ENCODE measurements at regions of chr17 and their contacts with region 1.

Region 1: DNA sequence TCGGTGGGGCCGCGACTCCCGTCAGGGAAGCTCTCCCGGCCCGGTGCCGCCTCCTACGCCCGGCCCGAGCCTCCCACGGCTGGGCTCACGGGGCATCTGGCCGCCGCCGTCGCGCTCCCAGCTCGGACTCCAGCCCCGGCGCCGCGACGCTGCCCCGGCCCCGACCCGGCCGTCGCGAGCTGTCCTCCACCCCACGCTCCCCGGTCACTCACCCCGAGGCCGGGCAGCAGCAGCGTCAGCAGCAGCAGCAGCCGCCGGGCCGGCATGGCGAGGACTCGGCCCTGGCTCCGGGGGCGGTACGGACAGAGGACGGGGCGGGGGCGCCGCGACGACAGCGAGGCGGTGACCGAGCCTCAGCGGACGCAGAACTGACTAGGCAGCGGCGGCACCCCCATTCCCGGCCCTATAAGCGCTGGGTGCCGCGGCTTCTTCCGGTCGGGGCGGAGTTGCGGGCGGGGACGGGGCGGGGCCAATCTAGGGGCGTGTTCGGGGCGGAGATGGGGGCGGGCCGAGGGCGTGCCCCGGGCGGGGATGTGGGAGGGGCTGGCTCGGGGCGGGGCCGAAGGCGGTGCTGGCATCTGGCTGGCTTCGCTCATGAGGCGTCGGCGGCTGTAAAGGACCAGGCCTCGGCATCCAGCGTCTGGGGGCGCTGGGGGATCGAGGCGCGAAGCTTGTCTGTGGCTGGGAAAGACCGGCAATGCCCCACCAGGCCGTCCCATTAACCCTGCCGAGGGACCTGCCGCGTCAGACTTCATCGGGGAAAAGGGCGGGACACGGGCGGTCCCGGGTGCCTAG is at the start of gene ERN1:
- DNase-seq: peak; percentile 92
- ATAC-seq: peak; percentile 87
- H3K4me3 ChIP-seq: peak within 1 kb of the TSS; percentile 32 to 80 (median 66)
- H3K4me3 Mint-ChIP-seq: peak within 1 kb of the TSS; percentile 89
- H3K27ac ChIP-seq: peak within 1 kb of the TSS; percentile 72 to 76
- H3K27ac Mint-ChIP-seq: peak within 1 kb of the TSS; percentile 89
- H3K4me1 ChIP-seq: peaks cover 13 to 23% of the 10 kb centered on the region in 2 donors
- H3K4me1 Mint-ChIP-seq: peaks cover 21% of the 10 kb centered on the region
- H3K27me3 ChIP-seq: no peaks in the 10 kb centered on the region
- H3K27me3 Mint-ChIP-seq: no peaks in the 10 kb centered on the region
- CTCF ChIP-seq: no peak
- total RNA-seq, gene ERN1: 19.4 and 24.7 TPM in 2 replicates

Region 2: DNA sequence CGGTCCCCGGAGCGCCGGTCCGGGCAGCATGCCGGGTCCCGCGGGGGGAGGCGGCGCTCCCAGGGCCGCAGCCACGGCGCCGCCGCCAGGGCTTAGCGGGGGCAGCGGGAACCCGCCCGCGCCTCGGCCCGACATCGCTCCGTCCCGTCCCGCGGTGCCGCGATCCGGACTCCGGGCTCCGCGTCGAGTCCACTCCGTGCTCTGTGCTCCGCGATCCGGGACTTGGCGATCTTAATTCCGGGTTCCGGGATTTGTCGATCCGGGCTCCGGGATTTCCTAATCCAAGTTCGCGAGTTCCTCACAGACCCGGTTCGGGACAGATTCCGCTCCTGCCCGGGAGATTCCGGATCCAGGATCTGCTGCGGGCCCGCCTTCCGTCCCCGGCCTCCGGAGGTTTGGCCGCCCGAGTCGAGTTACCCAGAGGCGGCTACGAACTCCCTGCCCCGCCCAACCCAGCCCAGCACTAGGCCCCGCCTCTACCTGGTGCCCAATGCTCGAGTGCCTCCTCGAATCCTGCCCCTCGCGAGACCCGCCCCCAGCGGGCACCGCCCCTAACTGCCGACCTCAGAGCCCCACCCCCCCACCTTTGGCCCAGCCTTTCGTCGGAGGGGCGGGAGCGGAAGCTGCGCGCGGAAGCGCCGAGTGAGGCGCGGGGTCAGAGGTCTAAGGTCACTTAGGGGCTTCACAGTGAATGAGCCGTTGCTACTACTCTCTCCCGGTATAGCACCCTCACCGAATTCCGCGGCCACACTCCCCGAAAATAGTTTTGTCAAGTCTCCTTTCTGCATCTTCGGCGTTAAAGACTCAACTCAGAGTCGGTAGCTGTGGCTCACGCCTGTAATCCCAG is 287.2 kb before region 1 on chr17 and contains the start of gene SMARCD2:
- CTCF ChIA-PET with region 1: interaction called, 3 read pairs
- POLR2A ChIA-PET with region 1: no interaction called
- intact Hi-C with region 1: loop called (anchors 1 kb)
- DNase-seq: peak; percentile 99
- ATAC-seq: peak; percentile 93
- H3K4me3 ChIP-seq: peak within 1 kb of the TSS; percentile 65 to 92 (median 89)
- H3K4me3 Mint-ChIP-seq: peak within 1 kb of the TSS; percentile 94
- H3K27ac ChIP-seq: peak within 1 kb of the TSS; percentile 90 to 92
- H3K27ac Mint-ChIP-seq: peak within 1 kb of the TSS; percentile 94
- H3K4me1 ChIP-seq: peaks cover 35 to 51% of the 10 kb centered on the region in 2 donors
- H3K4me1 Mint-ChIP-seq: peaks cover 43% of the 10 kb centered on the region
- H3K27me3 ChIP-seq: no peaks in the 10 kb centered on the region
- H3K27me3 Mint-ChIP-seq: no peaks in the 10 kb centered on the region
- CTCF ChIP-seq: no peak
- total RNA-seq, gene SMARCD2: 124 and 125 TPM in 2 replicates

Region 3: GRCh38 chr17:63919311-63919723 is 210.6 kb before region 1 on chr17:
- CTCF ChIA-PET with region 1: interaction called, 115 read pairs
- POLR2A ChIA-PET with region 1: interaction called, 4 read pairs
- intact Hi-C with region 1: no loop called
- DNase-seq: peak; percentile 93
- ATAC-seq: peak; percentile 58
- H3K4me3 ChIP-seq: peak overlapping the region in 3 of 5 experiments; percentile 8 to 26 (median 19)
- H3K4me3 Mint-ChIP-seq: peak overlapping the region; percentile 87
- H3K27ac ChIP-seq: peak overlapping the region in 1 of 2 donors; percentile 18
- H3K27ac Mint-ChIP-seq: peak overlapping the region; percentile 86
- H3K4me1 ChIP-seq: peaks cover 68 to 83% of the 10 kb centered on the region in 2 donors
- H3K4me1 Mint-ChIP-seq: peaks cover 72% of the 10 kb centered on the region
- H3K27me3 ChIP-seq: no peaks in the 10 kb centered on the region
- H3K27me3 Mint-ChIP-seq: no peaks in the 10 kb centered on the region
- CTCF ChIP-seq: peak; percentile 88

Region 4: GRCh38 chr17:63984651-63985386 is 145.1 kb before region 1 on chr17:
- CTCF ChIA-PET with region 1: interaction called, 12 read pairs
- POLR2A ChIA-PET with region 1: no interaction called
- intact Hi-C with region 1: no loop called
- DNase-seq: no peak
- ATAC-seq: peak; percentile 80
- H3K4me3 ChIP-seq: no peak overlapping the region
- H3K4me3 Mint-ChIP-seq: no peak overlapping the region
- H3K27ac ChIP-seq: no peak overlapping the region
- H3K27ac Mint-ChIP-seq: no peak overlapping the region
- H3K4me1 ChIP-seq: peaks cover 8 to 17% of the 10 kb centered on the region in 2 donors
- H3K4me1 Mint-ChIP-seq: peaks cover 19% of the 10 kb centered on the region
- H3K27me3 ChIP-seq: no peaks in the 10 kb centered on the region
- H3K27me3 Mint-ChIP-seq: no peaks in the 10 kb centered on the region
- CTCF ChIP-seq: no peak

Region 5: GRCh38 chr17:64063766-64064224 is 66.2 kb before region 1 on chr17:
- CTCF ChIA-PET with region 1: interaction called, 49 read pairs
- POLR2A ChIA-PET with region 1: interaction called, 3 read pairs
- intact Hi-C with region 1: loop called (anchors 5 kb)
- DNase-seq: peak; percentile 43
- ATAC-seq: no peak
- H3K4me3 ChIP-seq: no peak overlapping the region
- H3K4me3 Mint-ChIP-seq: no peak overlapping the region
- H3K27ac ChIP-seq: no peak overlapping the region
- H3K27ac Mint-ChIP-seq: peak overlapping the region; percentile 5
- H3K4me1 ChIP-seq: peaks cover 10% of the 10 kb centered on the region in 2 donors
- H3K4me1 Mint-ChIP-seq: peaks cover 20% of the 10 kb centered on the region
- H3K27me3 ChIP-seq: no peaks in the 10 kb centered on the region
- H3K27me3 Mint-ChIP-seq: no peaks in the 10 kb centered on the region
- CTCF ChIP-seq: peak; percentile 23

Region 6: DNA sequence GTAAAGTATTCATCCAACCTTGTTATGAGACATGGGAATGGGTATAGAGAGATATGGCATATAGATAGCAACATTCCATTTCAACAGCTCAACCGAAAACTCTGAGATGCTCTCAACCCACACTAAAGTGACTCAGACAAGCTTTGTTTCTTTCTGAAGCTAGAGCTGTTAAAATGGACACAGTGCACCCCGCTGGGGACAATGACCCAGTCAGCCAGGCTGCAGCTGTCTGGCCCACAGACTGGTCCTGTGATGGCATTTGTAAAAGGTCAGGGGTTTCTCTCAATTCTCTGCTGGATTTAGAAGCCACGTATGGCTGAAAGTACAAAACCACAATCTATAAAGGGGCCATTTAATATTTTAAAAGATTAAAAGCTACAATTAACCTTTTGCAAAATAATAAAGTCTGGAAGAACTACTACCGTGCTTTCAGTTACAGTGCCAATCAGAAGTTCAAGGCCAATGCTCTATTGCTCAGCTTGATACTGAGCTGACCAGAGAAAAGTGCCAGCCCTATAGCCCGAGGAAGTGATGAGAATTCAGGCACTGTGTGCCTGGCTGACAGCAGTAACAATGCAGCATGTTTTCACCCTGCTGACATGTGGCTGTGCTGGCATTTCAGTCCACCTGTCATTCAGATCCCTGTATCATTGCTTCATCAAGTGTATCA is 72.8 kb after region 1 on chr17:
- CTCF ChIA-PET with region 1: no interaction called
- POLR2A ChIA-PET with region 1: no interaction called
- intact Hi-C with region 1: no loop called
- DNase-seq: no peak
- ATAC-seq: no peak
- H3K4me3 ChIP-seq: no peak overlapping the region
- H3K4me3 Mint-ChIP-seq: no peak overlapping the region
- H3K27ac ChIP-seq: no peak overlapping the region
- H3K27ac Mint-ChIP-seq: no peak overlapping the region
- H3K4me1 ChIP-seq: no peaks in the 10 kb centered on the region
- H3K4me1 Mint-ChIP-seq: no peaks in the 10 kb centered on the region
- H3K27me3 ChIP-seq: no peaks in the 10 kb centered on the region
- H3K27me3 Mint-ChIP-seq: no peaks in the 10 kb centered on the region
- CTCF ChIP-seq: no peak

Region 7: GRCh38 chr17:64262417-64263260 is 132.7 kb after region 1 on chr17 and contains the start of gene TEX2:
- CTCF ChIA-PET with region 1: no interaction called
- POLR2A ChIA-PET with region 1: no interaction called
- intact Hi-C with region 1: loop called (anchors 1 kb)
- DNase-seq: peak; percentile 67
- ATAC-seq: peak; percentile 25
- H3K4me3 ChIP-seq: peak within 1 kb of the TSS; percentile 54 to 89 (median 74)
- H3K4me3 Mint-ChIP-seq: peak within 1 kb of the TSS; percentile 92
- H3K27ac ChIP-seq: peak within 1 kb of the TSS; percentile 48 to 68
- H3K27ac Mint-ChIP-seq: peak within 1 kb of the TSS; percentile 90
- H3K4me1 ChIP-seq: peaks cover 10 to 22% of the 10 kb centered on the region in 2 donors
- H3K4me1 Mint-ChIP-seq: peaks cover 28% of the 10 kb centered on the region
- H3K27me3 ChIP-seq: peaks cover 0 to 6% (median 0%) of the 10 kb centered on the region in 4 experiments
- H3K27me3 Mint-ChIP-seq: peaks cover 6% of the 10 kb centered on the region
- CTCF ChIP-seq: no peak
- total RNA-seq, gene TEX2: 6.9 and 7.6 TPM in 2 replicates